Transverse colon (tissue), 4 donors: ENCODE measurements at regions of chr12 and their contacts with region 1.

Region 1: DNA sequence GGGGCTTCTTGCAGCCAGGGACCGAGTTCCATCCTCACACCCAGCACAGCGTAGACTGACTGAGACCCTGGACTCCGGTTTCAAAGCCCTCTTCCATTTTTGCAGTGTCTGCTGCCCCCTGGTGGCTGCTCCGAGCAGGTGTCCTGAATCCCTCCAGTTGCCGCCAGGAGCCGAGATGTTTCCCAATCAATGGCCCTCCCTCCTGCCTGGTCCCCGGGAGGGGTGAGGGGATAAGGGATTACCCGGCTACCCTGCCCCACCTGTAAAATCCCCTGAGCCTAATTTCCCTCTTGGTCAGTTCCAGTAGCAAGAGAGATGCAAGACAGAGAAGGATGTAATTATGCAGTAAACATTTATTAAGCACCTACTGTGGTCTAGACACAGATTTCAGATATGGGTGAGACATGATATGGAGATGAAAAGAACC is 55.0 kb downstream of the PHETA1 start:
- DNase-seq: peak; percentile 66
- H3K4me3 ChIP-seq: no peak overlapping the region
- H3K27ac ChIP-seq: no peak overlapping the region
- H3K4me1 ChIP-seq: peaks cover 0 to 3% (median 0%) of the 10 kb centered on the region in 4 donors
- H3K27me3 ChIP-seq: peaks cover 5% of the 10 kb centered on the region
- CTCF ChIP-seq: peak; percentile 85 to 94 (median 88)
- EP300 ChIP-seq: no peak
- POLR2A ChIP-seq: no peak

Region 2: DNA sequence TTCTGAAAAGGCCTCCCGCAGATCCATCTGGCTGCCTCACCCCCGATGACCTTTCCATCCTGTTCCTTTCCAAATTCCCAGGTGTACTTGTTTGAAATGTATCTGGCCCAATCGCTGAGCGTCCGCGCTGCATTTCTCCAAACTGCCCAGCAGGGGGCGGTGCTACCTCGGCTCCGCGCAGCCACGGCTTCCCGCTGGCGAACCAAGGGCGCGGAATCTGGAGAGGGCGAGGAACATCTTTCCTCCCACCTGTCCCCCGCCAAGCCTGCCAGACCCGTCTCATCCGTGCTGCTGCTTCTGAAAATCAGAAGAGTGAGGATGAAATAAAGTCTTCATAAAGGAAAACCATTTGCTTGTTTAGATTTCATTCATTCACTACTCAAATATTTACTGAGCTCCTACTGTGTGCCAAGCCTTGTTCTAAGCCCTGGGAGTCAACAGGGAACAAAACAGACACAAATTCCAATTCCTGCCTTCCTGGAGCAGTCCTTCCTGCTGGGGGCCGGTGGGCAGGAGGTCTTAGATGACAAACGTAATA is 376.7 kb before region 1 on chr12:
- in situ Hi-C with region 1: loop called in 3 of 4 experiments (anchors 10 to 25 kb)
- intact Hi-C with region 1: loop called (anchors 5 kb)
- DNase-seq: peak; percentile 50
- H3K4me3 ChIP-seq: no peak overlapping the region
- H3K27ac ChIP-seq: no peak overlapping the region
- H3K4me1 ChIP-seq: peaks cover 0 to 6% (median 0%) of the 10 kb centered on the region in 4 donors
- H3K27me3 ChIP-seq: peaks cover 24% of the 10 kb centered on the region
- CTCF ChIP-seq: peak; percentile 72 to 96 (median 86)
- EP300 ChIP-seq: no peak
- POLR2A ChIP-seq: no peak

Region 3: GRCh38 chr12:111024205-111024801 is 289.5 kb before region 1 on chr12:
- in situ Hi-C with region 1: loop called (anchors 10 to 25 kb)
- intact Hi-C with region 1: loop called (anchors 5 kb)
- DNase-seq: peak; percentile 48
- H3K4me3 ChIP-seq: no peak overlapping the region
- H3K27ac ChIP-seq: no peak overlapping the region
- H3K4me1 ChIP-seq: no peaks in the 10 kb centered on the region
- H3K27me3 ChIP-seq: peaks cover 50% of the 10 kb centered on the region
- CTCF ChIP-seq: peak; percentile 60 to 71 (median 68)
- EP300 ChIP-seq: no peak
- POLR2A ChIP-seq: no peak

Region 4: DNA sequence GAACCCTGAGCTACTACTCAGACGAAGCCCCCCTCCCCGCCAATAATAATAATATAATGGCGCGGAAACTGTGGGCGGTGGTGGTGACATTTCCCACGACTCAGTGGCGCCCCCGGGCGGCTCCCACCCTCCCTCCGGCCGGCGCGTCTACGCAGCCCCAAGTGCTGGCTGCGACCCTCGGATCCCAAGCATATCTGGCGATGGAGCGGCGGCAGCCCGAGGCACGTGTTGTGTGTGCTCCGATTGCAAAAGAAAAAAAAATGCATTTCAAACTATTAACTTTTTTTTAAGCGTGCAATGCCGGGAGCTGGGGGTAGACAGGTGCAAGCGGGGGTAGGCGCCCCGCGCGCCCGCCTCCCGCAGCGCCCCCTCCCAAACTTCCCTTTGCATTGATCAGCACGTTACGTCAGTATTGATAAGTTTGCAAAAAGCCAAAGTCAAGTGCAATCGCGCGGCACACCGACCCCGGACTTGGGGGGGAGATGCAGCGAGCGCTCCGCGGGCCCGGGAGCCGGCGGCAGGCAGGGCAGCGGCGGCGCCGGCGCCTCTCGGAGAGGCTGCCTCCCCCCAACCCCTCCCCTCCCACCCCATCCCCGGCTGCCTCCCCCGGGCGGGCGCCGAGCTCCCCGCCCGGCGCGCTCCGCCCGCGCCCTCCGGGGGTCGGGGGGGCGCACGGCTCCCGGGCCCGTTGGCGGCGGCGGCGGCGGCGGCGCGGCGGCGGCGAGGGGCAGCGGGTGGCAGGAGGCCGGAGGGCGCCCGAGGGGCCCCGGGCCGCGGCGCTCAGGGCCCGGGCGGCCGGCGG is 280.4 kb before region 1 on chr12:
- in situ Hi-C with region 1: loop called in 3 of 4 experiments (anchors 10 to 25 kb)
- intact Hi-C with region 1: no loop called
- DNase-seq: no peak
- H3K4me3 ChIP-seq: no peak overlapping the region
- H3K27ac ChIP-seq: no peak overlapping the region
- H3K4me1 ChIP-seq: peaks cover 0 to 13% (median 7%) of the 10 kb centered on the region in 4 donors
- H3K27me3 ChIP-seq: peaks cover 97% of the 10 kb centered on the region
- CTCF ChIP-seq: no peak
- EP300 ChIP-seq: no peak
- POLR2A ChIP-seq: no peak

Region 5: GRCh38 chr12:111287125-111287900 is 26.5 kb before region 1 on chr12:
- in situ Hi-C with region 1: no loop called
- intact Hi-C with region 1: no loop called
- DNase-seq: no peak
- H3K4me3 ChIP-seq: no peak overlapping the region
- H3K27ac ChIP-seq: no peak overlapping the region
- H3K4me1 ChIP-seq: no peaks in the 10 kb centered on the region
- H3K27me3 ChIP-seq: no peaks in the 10 kb centered on the region
- CTCF ChIP-seq: no peak
- EP300 ChIP-seq: no peak
- POLR2A ChIP-seq: no peak